ENCODE measurements at regions of chr10 and their contacts with region 1.

Region 1: GRCh38 chr10:128150045-128150493 is 23.8 kb upstream of the MKI67 start:
- DNase-seq: peak; percentile 77
- H3K4me3 Mint-ChIP-seq: peak overlapping the region; percentile 76
- H3K27ac Mint-ChIP-seq: no peak overlapping the region
- H3K4me1 Mint-ChIP-seq: peaks cover 32% of the 10 kb centered on the region
- H3K27me3 Mint-ChIP-seq: peaks cover 27% of the 10 kb centered on the region

Region 2: GRCh38 chr10:127906548-127907377 is 243.3 kb before region 1 on chr10 and contains the start of gene PTPRE:
- intact Hi-C with region 1: loop called (anchors 10 kb)
- DNase-seq: peak; percentile 66
- H3K4me3 Mint-ChIP-seq: peak within 1 kb of the TSS; percentile 66
- H3K27ac Mint-ChIP-seq: no peak within 1 kb of the TSS
- H3K4me1 Mint-ChIP-seq: no peaks in the 10 kb centered on the region
- H3K27me3 Mint-ChIP-seq: peaks cover 26% of the 10 kb centered on the region
- total RNA-seq, gene PTPRE: 40.8 and 41.8 TPM in 2 replicates

Region 3: DNA sequence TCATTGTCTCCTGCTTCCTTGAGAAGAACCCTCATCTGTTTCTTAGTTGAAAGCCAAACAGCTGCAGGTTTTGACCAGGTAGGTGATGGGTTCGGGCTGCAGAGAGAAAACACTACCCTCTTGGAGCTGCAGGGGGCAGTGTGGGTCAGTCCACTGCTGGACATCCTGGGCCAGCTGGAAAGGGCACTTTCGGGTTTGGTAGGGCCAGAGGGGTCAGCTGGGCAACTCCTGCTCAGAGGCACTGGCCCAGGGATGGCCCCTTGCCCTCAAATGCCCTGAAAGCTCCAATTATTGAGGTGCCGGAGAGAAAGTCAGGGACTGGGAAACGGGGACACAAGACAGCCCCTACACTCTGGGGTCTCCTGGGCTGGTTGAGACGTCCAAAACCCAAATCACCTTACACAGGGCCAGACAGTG is 114.5 kb before region 1 on chr10:
- intact Hi-C with region 1: loop called (anchors 2 kb)
- DNase-seq: peak; percentile 42
- H3K4me3 Mint-ChIP-seq: no peak overlapping the region
- H3K27ac Mint-ChIP-seq: no peak overlapping the region
- H3K4me1 Mint-ChIP-seq: no peaks in the 10 kb centered on the region
- H3K27me3 Mint-ChIP-seq: no peaks in the 10 kb centered on the region

Region 4: GRCh38 chr10:128078136-128078969 is 71.7 kb before region 1 on chr10:
- intact Hi-C with region 1: loop called (anchors 1 kb)
- DNase-seq: peak; percentile 25
- H3K4me3 Mint-ChIP-seq: no peak overlapping the region
- H3K27ac Mint-ChIP-seq: no peak overlapping the region
- H3K4me1 Mint-ChIP-seq: peaks cover 9% of the 10 kb centered on the region
- H3K27me3 Mint-ChIP-seq: no peaks in the 10 kb centered on the region

Region 5: GRCh38 chr10:128180843-128181242 is 30.8 kb after region 1 on chr10:
- intact Hi-C with region 1: loop called (anchors 1 kb)
- DNase-seq: peak; percentile 68
- H3K4me3 Mint-ChIP-seq: peak overlapping the region; percentile 68
- H3K27ac Mint-ChIP-seq: peak overlapping the region; percentile 82
- H3K4me1 Mint-ChIP-seq: peaks cover 62% of the 10 kb centered on the region
- H3K27me3 Mint-ChIP-seq: no peaks in the 10 kb centered on the region